CD4-positive, alpha-beta memory T cell (primary cell): ENCODE measurements at regions of chr7 and their contacts with region 1.

Region 1: DNA sequence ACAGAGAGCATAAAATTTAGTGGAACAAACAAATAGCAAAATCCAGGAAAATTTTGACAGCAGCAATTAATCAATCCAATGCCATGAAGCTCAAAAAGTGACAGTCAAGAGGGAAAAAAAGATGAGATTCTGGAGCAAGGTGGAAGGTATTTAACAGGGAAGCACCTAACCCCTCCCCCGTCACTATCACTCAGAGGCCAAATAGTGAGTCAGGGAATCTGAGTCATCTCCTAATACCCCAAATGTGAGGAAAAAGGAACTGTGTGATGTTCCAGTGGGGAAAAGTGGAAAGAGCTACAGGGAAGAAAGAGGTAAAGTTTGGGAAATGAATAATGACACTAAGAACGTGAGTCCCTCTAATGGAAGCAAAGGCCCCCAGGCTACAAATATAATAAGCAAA is 113.2 kb upstream of the PHF14 start:
- DNase-seq: no peak
- H3K4me3 ChIP-seq: no peak overlapping the region
- H3K4me3 Mint-ChIP-seq: no peak overlapping the region
- H3K27ac ChIP-seq: no peak overlapping the region
- H3K27ac Mint-ChIP-seq: no peak overlapping the region
- H3K4me1 ChIP-seq: no peaks in the 10 kb centered on the region
- H3K4me1 Mint-ChIP-seq: no peaks in the 10 kb centered on the region
- H3K27me3 ChIP-seq: no peaks in the 10 kb centered on the region
- H3K27me3 Mint-ChIP-seq: peaks cover 0 to 3% of the 10 kb centered on the region in 2 donors

Region 2: GRCh38 chr7:9189703-9190102 is 1670.8 kb before region 1 on chr7:
- CTCF ChIA-PET with region 1: no interaction called
- POLR2A ChIA-PET with region 1: no interaction called
- intact Hi-C with region 1: loop called (anchors 5 kb)
- DNase-seq: no peak
- H3K4me3 ChIP-seq: no peak overlapping the region
- H3K4me3 Mint-ChIP-seq: no peak overlapping the region
- H3K27ac ChIP-seq: no peak overlapping the region
- H3K27ac Mint-ChIP-seq: peak overlapping the region in 1 of 7 donors; percentile 1
- H3K4me1 ChIP-seq: no peaks in the 10 kb centered on the region
- H3K4me1 Mint-ChIP-seq: no peaks in the 10 kb centered on the region
- H3K27me3 ChIP-seq: no peaks in the 10 kb centered on the region
- H3K27me3 Mint-ChIP-seq: no peaks in the 10 kb centered on the region

Region 3: DNA sequence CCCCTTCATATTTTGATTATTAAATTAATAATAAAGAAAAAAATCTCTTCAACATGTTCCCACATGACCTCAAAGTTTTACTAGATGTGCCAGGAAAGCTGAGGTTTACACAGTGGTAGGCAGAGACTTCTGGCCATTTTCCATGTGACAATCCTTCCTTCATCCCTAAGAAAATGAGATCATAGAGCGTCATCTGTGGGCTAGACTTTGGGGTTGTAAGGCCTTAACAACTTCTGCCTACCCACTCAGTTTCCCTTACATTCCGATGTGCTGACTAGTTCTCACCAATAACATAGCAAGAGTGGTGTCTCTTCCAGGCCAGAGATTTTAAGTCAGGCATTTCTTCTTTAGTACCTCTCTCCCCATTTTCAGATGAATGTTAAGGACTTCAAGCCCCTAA is 58.0 kb before region 1 on chr7:
- CTCF ChIA-PET with region 1: no interaction called
- POLR2A ChIA-PET with region 1: no interaction called
- intact Hi-C with region 1: no loop called
- DNase-seq: no peak
- H3K4me3 ChIP-seq: no peak overlapping the region
- H3K4me3 Mint-ChIP-seq: no peak overlapping the region
- H3K27ac ChIP-seq: no peak overlapping the region
- H3K27ac Mint-ChIP-seq: no peak overlapping the region
- H3K4me1 ChIP-seq: no peaks in the 10 kb centered on the region
- H3K4me1 Mint-ChIP-seq: no peaks in the 10 kb centered on the region
- H3K27me3 ChIP-seq: no peaks in the 10 kb centered on the region
- H3K27me3 Mint-ChIP-seq: no peaks in the 10 kb centered on the region